ENCODE measurements at regions of chr7 and their contacts with region 1.

Region 1: DNA sequence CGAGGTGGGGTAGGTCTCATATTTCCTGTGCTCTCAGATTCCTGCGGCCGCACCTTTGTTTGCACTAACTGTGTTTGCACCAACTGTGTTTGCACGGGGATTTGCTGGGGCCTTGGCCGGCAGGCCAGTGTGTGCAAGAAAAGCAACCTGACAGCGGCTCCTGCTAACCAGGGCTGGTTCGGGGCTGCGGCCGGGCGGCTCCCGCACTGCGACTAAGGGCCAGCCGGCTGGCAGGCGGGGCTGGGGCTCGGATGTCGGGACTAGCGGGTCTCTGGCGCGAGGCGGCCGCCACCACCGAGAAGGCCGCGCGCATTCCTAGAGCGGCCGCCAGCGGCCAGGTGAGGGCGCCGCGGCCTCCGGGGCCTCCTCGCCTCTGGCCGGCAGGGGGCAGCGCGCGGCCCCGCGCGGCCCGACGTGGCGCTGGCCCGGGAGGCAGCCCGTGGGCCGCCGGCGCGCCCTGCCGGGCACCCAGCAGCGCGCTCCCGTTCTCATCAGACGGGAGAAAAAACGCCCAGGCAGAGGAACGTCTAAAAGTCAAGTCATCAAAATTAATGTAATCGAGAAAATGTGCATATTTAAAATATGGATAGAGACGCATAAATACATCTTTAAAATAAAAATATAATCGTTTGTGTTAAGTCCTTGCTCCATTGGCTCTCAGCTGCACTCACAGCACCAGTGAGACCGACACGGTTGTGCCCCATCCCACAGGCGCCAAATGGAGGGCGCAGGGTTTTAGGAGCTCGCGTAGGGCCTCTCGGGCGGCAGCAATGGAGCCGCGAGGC is 38.5 kb downstream of the ZNF777 start:
- DNase-seq: peak; percentile 58 to 79 (median 76)
- H3K4me3 ChIP-seq: peak overlapping the region; percentile 62
- H3K4me3 Mint-ChIP-seq: peak overlapping the region; percentile 72 to 92 (median 79)
- H3K27ac ChIP-seq: peak overlapping the region; percentile 60
- H3K27ac Mint-ChIP-seq: peak overlapping the region; percentile 56 to 93 (median 78)
- H3K4me1 ChIP-seq: peaks cover 5% of the 10 kb centered on the region
- H3K4me1 Mint-ChIP-seq: peaks cover 0 to 12% (median 5%) of the 10 kb centered on the region in 3 donors
- H3K27me3 ChIP-seq: no peaks in the 10 kb centered on the region
- H3K27me3 Mint-ChIP-seq: no peaks in the 10 kb centered on the region

Region 2: GRCh38 chr7:149398195-149398820 is 24.0 kb before region 1 on chr7:
- CTCF ChIA-PET with region 1: no interaction called
- POLR2A ChIA-PET with region 1: no interaction called
- DNase-seq: no peak
- H3K4me3 ChIP-seq: no peak overlapping the region
- H3K4me3 Mint-ChIP-seq: no peak overlapping the region
- H3K27ac ChIP-seq: no peak overlapping the region
- H3K27ac Mint-ChIP-seq: peak overlapping the region in 1 of 8 donors; percentile 39
- H3K4me1 ChIP-seq: no peaks in the 10 kb centered on the region
- H3K4me1 Mint-ChIP-seq: no peaks in the 10 kb centered on the region
- H3K27me3 ChIP-seq: peaks cover 3% of the 10 kb centered on the region
- H3K27me3 Mint-ChIP-seq: peaks cover 20 to 60% of the 10 kb centered on the region in 2 donors

Region 3: GRCh38 chr7:149460493-149461277 is 38.4 kb after region 1 on chr7 and contains the start of gene ZNF777:
- CTCF ChIA-PET with region 1: interaction called, 16 read pairs
- POLR2A ChIA-PET with region 1: interaction called, 14 read pairs
- DNase-seq: peak; percentile 69 to 88 (median 76)
- H3K4me3 ChIP-seq: peak within 1 kb of the TSS; percentile 76
- H3K4me3 Mint-ChIP-seq: peak within 1 kb of the TSS; percentile 86 to 94 (median 88)
- H3K27ac ChIP-seq: peak within 1 kb of the TSS; percentile 74
- H3K27ac Mint-ChIP-seq: peak within 1 kb of the TSS; percentile 43 to 95 (median 89)
- H3K4me1 ChIP-seq: peaks cover 26% of the 10 kb centered on the region
- H3K4me1 Mint-ChIP-seq: peaks cover 29 to 39% (median 33%) of the 10 kb centered on the region in 3 donors
- H3K27me3 ChIP-seq: no peaks in the 10 kb centered on the region
- H3K27me3 Mint-ChIP-seq: peaks cover 2 to 14% of the 10 kb centered on the region in 2 donors
- total RNA-seq, gene ZNF777: 21.9 to 22.1 TPM

Measured in CD8-positive, alpha-beta memory T cell (primary cell).